ENCODE measurements at regions of chr7 and their contacts with region 1.

Region 1: DNA sequence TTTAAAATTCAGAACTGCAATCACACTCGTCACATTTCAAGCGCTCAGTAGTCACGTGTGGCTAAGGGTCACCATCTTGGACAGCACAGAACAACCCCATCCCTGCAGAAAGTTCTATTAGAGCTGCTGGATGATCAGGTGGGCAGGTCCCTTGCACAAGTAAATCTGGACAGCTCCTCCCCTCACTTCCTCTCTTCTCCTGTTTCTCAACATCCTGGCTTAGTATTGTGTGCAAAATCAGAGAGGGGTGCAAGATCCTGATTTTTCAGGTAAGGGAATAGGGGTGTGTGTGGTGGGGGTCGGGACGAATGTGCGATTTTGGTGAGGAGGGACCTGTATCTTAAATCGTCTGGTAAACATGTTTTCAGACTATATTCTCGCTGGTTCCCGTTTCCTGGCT is at the start of gene GIMAP4:
- DNase-seq: peak; percentile 59
- ATAC-seq: peak; percentile 61
- H3K4me3 Mint-ChIP-seq: peak within 1 kb of the TSS; percentile 88
- H3K27ac Mint-ChIP-seq: peak within 1 kb of the TSS; percentile 90
- H3K4me1 Mint-ChIP-seq: peaks cover 59% of the 10 kb centered on the region
- H3K27me3 Mint-ChIP-seq: no peaks in the 10 kb centered on the region
- total RNA-seq, gene GIMAP4: 174 to 186 TPM

Region 2: DNA sequence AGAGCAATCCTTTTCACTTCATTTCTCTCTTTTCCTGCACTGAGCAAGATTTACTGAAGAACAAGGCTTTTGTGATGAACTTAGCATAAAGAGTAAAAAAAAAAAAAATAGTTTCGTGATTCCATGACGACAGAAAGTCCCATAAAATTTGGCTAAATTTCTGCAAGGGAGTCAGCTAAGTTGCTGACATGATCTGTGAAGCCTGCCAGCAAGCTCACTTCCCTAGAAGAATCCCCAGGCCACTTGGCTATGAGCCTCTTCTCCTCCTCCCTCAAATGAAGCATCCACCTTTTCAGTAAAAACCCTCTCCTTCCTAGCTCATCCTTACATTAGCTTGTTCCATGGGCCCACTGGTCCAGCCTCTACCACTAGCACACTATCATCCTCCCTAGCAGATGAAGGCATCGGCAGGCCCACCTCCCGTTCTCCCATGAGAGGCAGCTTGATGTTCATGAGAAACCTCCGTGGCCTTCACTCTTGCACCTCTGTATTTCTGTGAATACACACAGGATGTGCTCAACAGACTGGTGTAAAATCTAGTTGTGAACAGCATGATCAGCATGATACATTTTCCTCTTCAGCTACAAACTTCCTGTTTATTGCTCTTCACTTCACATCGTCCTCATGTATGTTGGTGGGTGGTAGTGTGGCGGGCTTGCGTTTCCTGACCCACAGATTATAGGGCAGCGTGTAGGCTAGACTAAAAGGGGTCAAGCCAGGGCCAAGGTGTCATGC is 85.8 kb before region 1 on chr7:
- CTCF ChIA-PET with region 1: interaction called, 3 read pairs
- POLR2A ChIA-PET with region 1: interaction called, 12 read pairs
- DNase-seq: peak; percentile 78
- ATAC-seq: peak; percentile 70
- H3K4me3 Mint-ChIP-seq: peak overlapping the region; percentile 75
- H3K27ac Mint-ChIP-seq: peak overlapping the region; percentile 99
- H3K4me1 Mint-ChIP-seq: peaks cover 87% of the 10 kb centered on the region
- H3K27me3 Mint-ChIP-seq: no peaks in the 10 kb centered on the region

Region 3: DNA sequence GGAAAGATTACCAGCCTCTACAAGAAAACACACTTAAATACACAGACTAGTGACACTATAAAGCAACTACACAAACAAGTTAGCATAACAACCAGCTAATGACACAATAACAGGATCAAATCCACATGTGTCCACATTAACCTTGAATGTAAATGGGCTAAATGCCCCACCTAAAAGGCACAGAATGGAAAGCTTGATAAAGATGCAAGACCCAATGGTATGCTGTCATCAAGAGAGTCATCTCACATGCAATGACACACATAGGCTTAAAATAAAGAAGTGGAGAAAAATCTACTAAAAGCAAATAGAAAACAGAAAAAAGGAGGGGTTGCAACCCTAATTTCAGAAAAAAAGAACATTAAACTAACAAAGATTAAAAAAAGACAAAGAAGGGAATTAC is 14.0 kb before region 1 on chr7:
- CTCF ChIA-PET with region 1: interaction called, 13 read pairs
- POLR2A ChIA-PET with region 1: interaction called, 3 read pairs
- DNase-seq: no peak
- ATAC-seq: no peak
- H3K4me3 Mint-ChIP-seq: no peak overlapping the region
- H3K27ac Mint-ChIP-seq: no peak overlapping the region
- H3K4me1 Mint-ChIP-seq: peaks cover 35% of the 10 kb centered on the region
- H3K27me3 Mint-ChIP-seq: no peaks in the 10 kb centered on the region

Region 4: GRCh38 chr7:150685219-150686029 is 118.3 kb after region 1 on chr7 and contains the start of gene GIMAP2:
- CTCF ChIA-PET with region 1: interaction called, 3 read pairs
- POLR2A ChIA-PET with region 1: interaction called, 10 read pairs
- DNase-seq: peak; percentile 50
- ATAC-seq: peak; percentile 89
- H3K4me3 Mint-ChIP-seq: peak within 1 kb of the TSS; percentile 95
- H3K27ac Mint-ChIP-seq: peak within 1 kb of the TSS; percentile 97
- H3K4me1 Mint-ChIP-seq: peaks cover 76% of the 10 kb centered on the region
- H3K27me3 Mint-ChIP-seq: no peaks in the 10 kb centered on the region
- total RNA-seq, gene GIMAP2: 79.0 to 82.9 TPM

Region 5: DNA sequence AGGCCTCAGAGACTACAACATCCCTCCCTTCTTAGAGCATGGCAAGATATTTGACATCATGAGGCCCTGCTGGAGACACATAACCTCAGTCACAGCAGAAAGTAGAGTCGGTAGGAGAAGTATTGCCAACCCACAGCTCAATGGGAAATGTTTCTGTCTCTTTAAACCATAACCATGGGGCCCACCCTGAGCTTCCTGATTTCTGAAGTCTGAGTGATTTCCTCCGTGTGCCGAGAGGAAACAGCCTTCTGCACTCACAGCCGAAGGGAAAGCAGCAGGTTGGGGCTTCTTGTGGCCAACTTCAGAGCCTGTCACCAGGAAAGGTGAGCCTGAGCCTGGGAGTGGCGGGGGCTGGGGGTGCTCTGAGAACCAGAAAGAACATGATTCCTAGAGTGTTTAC is 149.2 kb after region 1 on chr7 and contains the start of gene GIMAP1:
- CTCF ChIA-PET with region 1: interaction called, 11 read pairs
- POLR2A ChIA-PET with region 1: interaction called, 8 read pairs
- DNase-seq: peak; percentile 71
- ATAC-seq: peak; percentile 85
- H3K4me3 Mint-ChIP-seq: peak within 1 kb of the TSS; percentile 97
- H3K27ac Mint-ChIP-seq: peak within 1 kb of the TSS; percentile 87
- H3K4me1 Mint-ChIP-seq: peaks cover 51% of the 10 kb centered on the region
- H3K27me3 Mint-ChIP-seq: no peaks in the 10 kb centered on the region
- total RNA-seq, gene GIMAP1: 19.0 to 20.2 TPM

Region 6: DNA sequence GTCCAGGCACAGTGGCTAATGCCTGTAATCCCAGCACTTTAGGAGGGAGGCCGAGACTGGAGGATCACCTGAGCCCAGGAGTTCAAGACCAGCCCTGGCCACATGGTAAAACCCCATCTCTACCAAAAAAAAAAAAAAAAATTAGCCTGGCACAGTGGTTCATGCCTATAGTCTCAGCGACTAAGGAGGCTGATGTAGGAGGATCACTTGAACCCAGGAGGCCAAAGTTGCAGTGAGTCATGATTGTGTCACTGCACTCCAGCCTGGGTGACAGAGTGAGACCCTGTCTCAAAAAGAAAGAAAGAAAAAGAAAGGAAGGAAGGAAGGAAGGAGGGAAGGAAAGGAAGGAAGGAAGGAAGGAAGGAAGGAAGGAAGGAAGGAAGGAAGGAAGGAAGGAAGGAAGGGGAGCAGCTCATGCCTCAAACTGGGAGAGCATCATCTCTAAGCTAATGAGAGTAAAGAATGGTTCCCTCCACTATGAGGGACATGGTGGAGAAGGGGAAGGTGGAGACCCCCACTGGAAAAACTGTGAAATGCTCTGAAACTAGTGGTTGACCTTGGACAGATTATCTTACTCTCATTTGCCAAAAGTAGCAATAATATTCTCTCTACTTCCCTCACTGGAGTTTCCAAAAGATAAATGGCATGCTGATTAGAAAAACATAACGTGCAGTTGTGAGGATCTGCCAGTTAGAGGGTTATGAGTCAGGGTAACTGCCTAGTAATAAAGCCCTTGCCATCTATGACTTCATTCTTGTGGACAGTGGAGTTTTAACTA is 186.8 kb after region 1 on chr7:
- CTCF ChIA-PET with region 1: interaction called, 14 read pairs
- POLR2A ChIA-PET with region 1: interaction called, 13 read pairs
- DNase-seq: peak; percentile 50
- ATAC-seq: peak; percentile 21
- H3K4me3 Mint-ChIP-seq: peak overlapping the region; percentile 40
- H3K27ac Mint-ChIP-seq: peak overlapping the region; percentile 86
- H3K4me1 Mint-ChIP-seq: peaks cover 70% of the 10 kb centered on the region
- H3K27me3 Mint-ChIP-seq: no peaks in the 10 kb centered on the region